ENCODE measurements at regions of chr7 and their contacts with region 1.

Region 1: GRCh38 chr7:149474309-149475114 is 13.7 kb upstream of the ZNF777 start:
- DNase-seq: no peak
- H3K4me3 Mint-ChIP-seq: no peak overlapping the region
- H3K27ac Mint-ChIP-seq: no peak overlapping the region
- H3K4me1 Mint-ChIP-seq: peaks cover 8% of the 10 kb centered on the region
- H3K27me3 Mint-ChIP-seq: no peaks in the 10 kb centered on the region
- CTCF ChIP-seq: no peak

Region 2: GRCh38 chr7:149440222-149440621 is 34.3 kb before region 1 on chr7:
- CTCF ChIA-PET with region 1: no interaction called
- POLR2A ChIA-PET with region 1: no interaction called
- intact Hi-C with region 1: no loop called
- DNase-seq: no peak
- H3K4me3 Mint-ChIP-seq: no peak overlapping the region
- H3K27ac Mint-ChIP-seq: no peak overlapping the region
- H3K4me1 Mint-ChIP-seq: no peaks in the 10 kb centered on the region
- H3K27me3 Mint-ChIP-seq: no peaks in the 10 kb centered on the region
- CTCF ChIP-seq: no peak

Region 3: DNA sequence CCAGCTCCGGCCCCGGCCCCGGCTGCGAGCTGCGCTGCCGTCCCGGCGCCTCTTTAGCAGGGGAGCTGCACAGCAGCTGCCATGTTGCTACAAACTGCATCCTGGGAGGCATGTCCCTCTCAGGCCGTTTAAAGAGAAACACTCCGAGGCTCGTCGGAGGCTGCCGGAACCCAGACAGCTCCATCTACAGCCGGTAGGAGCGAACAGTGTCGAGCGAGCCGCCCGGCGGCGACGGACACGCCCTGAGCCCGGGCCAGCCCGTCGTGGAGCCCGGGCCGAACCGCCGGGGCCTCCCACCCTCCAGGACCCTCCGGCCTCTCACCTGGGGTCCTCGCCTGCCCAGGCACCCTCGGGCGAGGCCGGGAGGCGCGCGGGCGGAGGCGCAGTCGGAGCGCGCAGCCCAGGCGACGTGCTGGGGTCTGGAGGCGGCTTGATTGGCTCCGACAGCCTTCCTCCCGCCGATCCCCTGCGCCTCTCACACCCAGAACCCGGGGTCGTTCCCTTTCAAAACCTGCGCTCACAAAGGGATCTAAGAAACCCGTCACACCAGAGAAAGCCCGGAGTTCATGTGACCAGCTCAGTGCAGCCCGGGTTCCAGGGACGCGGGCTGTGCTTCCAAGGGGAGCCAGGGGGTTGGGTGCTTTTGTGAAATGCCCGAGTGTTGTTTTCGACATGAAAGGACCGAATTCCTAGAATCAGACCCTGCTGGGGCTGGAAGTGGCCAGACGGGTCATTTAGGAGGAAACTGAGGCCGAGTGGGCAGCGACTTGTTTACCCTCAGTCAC is 13.8 kb before region 1 on chr7 and contains the start of gene ZNF777:
- CTCF ChIA-PET with region 1: interaction called, 10 read pairs
- POLR2A ChIA-PET with region 1: interaction called, 6 read pairs
- intact Hi-C with region 1: no loop called
- DNase-seq: peak; percentile 84
- H3K4me3 Mint-ChIP-seq: peak within 1 kb of the TSS; percentile 72
- H3K27ac Mint-ChIP-seq: no peak within 1 kb of the TSS
- H3K4me1 Mint-ChIP-seq: peaks cover 16% of the 10 kb centered on the region
- H3K27me3 Mint-ChIP-seq: no peaks in the 10 kb centered on the region
- CTCF ChIP-seq: peak; percentile 36
- total RNA-seq, gene ZNF777: 19.5 and 22.9 TPM in 2 replicates

Measured in MCF 10A (cell line).